ENCODE measurements at regions of chr15 and their contacts with region 1.

Region 1: DNA sequence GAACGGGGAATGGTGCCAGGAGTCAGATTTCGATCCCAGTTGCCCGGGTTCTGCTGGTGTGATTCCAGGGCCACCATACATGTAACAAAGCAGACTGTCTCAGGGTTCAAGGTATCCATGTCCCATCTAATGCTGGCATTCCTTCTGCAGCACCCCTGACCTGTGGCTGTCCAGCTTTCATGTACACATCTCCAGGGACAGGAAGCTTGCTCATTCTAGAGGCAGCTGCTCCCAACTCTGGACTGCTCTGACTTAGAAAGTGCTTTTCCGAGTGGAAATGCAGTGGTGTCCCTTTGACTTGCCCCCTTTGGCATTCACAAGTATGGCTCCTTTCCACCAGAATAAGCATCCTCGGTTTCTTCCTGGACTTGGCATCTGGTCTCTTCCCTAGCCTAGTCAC is 30.9 kb downstream of the PML start:
- DNase-seq: no peak
- H3K4me3 ChIP-seq: no peak overlapping the region
- H3K27ac ChIP-seq: peak overlapping the region in 1 of 4 donors; percentile 23
- H3K4me1 ChIP-seq: peaks cover 0 to 8% (median 2%) of the 10 kb centered on the region in 4 donors
- H3K27me3 ChIP-seq: no peaks in the 10 kb centered on the region
- CTCF ChIP-seq: no peak
- EP300 ChIP-seq: no peak
- POLR2A ChIP-seq: no peak

Region 2: DNA sequence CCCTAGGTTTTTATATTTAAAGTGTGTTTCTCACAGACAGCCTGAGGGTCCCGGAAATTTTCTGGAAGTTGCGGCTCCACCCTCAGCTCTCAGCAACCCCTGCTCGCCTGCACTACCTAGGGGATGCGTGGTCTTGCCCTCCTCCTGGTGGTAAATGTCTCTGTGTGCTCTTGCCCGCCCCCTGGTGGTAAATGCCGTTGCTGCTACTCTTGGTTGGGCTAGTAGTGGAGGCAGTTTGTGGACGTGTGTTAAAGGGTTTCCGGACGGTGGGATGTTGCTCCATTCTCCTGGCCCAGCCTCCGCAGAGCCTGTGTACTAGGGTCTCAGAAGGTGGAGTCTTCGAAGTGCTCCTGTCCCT is 60.7 kb before region 1 on chr15:
- in situ Hi-C with region 1: loop called in 1 of 4 experiments (anchors 10 kb)
- intact Hi-C with region 1: no loop called
- DNase-seq: peak; percentile 86
- H3K4me3 ChIP-seq: peak overlapping the region in 1 of 4 donors; percentile 26
- H3K27ac ChIP-seq: peak overlapping the region in 2 of 4 donors; percentile 29 to 59
- H3K4me1 ChIP-seq: peaks cover 0 to 15% (median 7%) of the 10 kb centered on the region in 4 donors
- H3K27me3 ChIP-seq: peaks cover 5% of the 10 kb centered on the region
- CTCF ChIP-seq: peak; percentile 88 to 95 (median 93)
- EP300 ChIP-seq: no peak
- POLR2A ChIP-seq: no peak

Region 3: GRCh38 chr15:74007820-74008371 is 17.5 kb before region 1 on chr15:
- in situ Hi-C with region 1: no loop called
- intact Hi-C with region 1: loop called (anchors 1 kb)
- DNase-seq: no peak
- H3K4me3 ChIP-seq: no peak overlapping the region
- H3K27ac ChIP-seq: peak overlapping the region; percentile 70 to 87 (median 78)
- H3K4me1 ChIP-seq: peaks cover 43 to 70% (median 50%) of the 10 kb centered on the region in 4 donors
- H3K27me3 ChIP-seq: no peaks in the 10 kb centered on the region
- CTCF ChIP-seq: no peak
- EP300 ChIP-seq: no peak
- POLR2A ChIP-seq: no peak